ENCODE measurements at regions of chr3 and their contacts with region 1.

Region 1: GRCh38 chr3:10772271-10773161 is 43.5 kb upstream of the SLC6A11 start:
- DNase-seq: peak; percentile 58
- H3K4me3 ChIP-seq: no peak overlapping the region
- H3K27ac ChIP-seq: no peak overlapping the region
- H3K4me1 ChIP-seq: peaks cover 0 to 3% of the 10 kb centered on the region in 2 experiments; a peak in 1 of 4 replicates
- H3K27me3 ChIP-seq: no peaks in the 10 kb centered on the region
- CTCF ChIP-seq: 0 out of 2 replicates have a peak, but pooled peaks have one; percentile 8
- EP300 ChIP-seq: no peak
- RAD21 ChIP-seq: no peak

Region 2: DNA sequence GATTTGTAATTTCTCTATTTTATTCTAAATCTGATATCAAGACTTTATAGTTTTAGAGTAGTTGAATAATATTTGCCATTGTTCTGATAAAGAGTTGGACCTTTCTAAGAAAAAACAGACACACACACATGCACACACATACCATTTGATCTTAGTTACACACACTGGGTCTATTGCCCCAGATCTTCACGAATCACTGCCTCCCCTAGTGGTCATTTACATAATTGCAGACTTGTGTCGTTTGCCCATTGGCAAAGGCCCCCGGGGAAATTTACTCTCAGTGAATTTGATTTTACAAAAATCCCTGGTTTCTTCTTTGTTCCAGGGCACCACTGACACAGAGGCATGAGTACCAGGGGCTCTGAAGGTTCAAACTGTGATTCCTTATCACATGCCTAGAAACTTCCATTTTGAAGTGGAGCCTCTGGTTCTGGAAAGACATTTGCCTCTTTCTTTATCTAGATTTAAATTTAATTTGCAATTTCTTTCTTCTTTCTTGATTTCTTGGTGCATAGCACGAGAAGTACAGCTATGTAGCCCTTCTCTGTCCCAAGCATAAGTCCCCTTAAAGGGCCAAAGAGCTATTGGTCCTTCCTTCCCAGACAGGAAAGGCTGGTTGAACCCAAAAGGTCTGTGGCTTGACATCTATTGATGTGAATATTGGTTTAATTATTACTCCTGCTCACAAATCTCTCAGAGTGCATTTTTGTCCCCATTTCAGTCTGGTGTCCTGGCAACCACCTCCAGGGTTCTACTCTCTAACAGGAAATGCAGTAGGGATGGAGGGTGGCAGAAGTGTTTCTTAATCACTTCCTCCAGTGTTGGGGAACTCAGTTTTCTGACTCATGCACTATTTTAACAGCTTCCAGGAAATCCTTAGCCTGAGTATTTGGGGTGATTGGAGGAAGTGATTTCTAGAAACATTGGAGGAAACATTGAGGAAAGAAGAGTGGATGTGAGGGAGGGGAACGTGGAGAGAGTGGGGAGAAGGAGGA is 11.1 kb after region 1 on chr3:
- CTCF ChIA-PET with region 1: interaction called, 41 read pairs
- POLR2A ChIA-PET with region 1: no interaction called
- DNase-seq: peak; percentile 42
- H3K4me3 ChIP-seq: peak overlapping the region in 1 of 2 experiments; percentile 13; a peak in 1 of 4 replicates
- H3K27ac ChIP-seq: no peak overlapping the region
- H3K4me1 ChIP-seq: no peaks in the 10 kb centered on the region
- H3K27me3 ChIP-seq: no peaks in the 10 kb centered on the region
- CTCF ChIP-seq: peak; percentile 72
- EP300 ChIP-seq: no peak
- RAD21 ChIP-seq: peak; percentile 40; the same call in 1 of the 2 replicates

Region 3: GRCh38 chr3:11185564-11186317 is 413.2 kb after region 1 on chr3:
- CTCF ChIA-PET with region 1: no interaction called
- POLR2A ChIA-PET with region 1: no interaction called
- DNase-seq: no peak
- H3K4me3 ChIP-seq: no peak overlapping the region
- H3K27ac ChIP-seq: peak overlapping the region; percentile 69 to 87
- H3K4me1 ChIP-seq: peaks cover 14 to 20% of the 10 kb centered on the region in 2 experiments
- H3K27me3 ChIP-seq: no peaks in the 10 kb centered on the region
- CTCF ChIP-seq: peak; percentile 18; the same call in 1 of the 2 replicates
- EP300 ChIP-seq: peak in 1 of 2 experiments; percentile 86; a peak in 2 of 4 replicates
- RAD21 ChIP-seq: no peak

Measured in SK-N-SH (cell line).